Activated CD4-positive, alpha-beta memory T cell treated with anti-CD3 and anti-CD28 coated beads, Interleukin-2, amount 10 ng/mL, durations not matched to agents 7 days and 5 days (primary cell): ENCODE measurements at regions of chr19 and their contacts with region 1.

Region 1: DNA sequence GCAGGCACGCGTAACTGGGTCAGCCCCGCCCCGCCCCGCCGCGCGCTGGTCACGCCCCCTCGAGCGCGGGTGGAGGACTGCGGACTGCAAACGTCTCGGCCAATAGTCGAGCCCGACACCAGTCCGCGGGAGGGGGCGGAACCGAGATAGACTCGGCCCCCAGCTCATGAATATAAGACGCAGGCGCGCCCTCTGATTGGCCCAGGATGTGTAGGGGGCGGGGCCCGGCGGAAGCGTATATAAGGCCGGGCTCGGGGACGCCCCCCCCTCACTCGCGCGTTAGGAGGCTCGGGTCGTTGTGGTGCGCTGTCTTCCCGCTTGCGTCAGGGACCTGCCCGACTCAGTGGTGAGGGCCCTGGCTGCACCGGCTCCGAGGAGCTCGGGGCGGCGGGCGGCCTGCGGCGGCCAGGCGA is at the start of gene CIRBP:
- DNase-seq: peak; percentile 100
- H3K4me3 Mint-ChIP-seq: peak within 1 kb of the TSS; percentile 91
- H3K27ac Mint-ChIP-seq: peak within 1 kb of the TSS; percentile 85
- H3K4me1 Mint-ChIP-seq: peaks cover 70% of the 10 kb centered on the region
- H3K27me3 Mint-ChIP-seq: peaks cover 3% of the 10 kb centered on the region
- total RNA-seq, gene CIRBP: 203 to 204 TPM

Region 2: GRCh38 chr19:984165-984967 is 284.7 kb before region 1 on chr19 and contains the start of gene WDR18:
- CTCF ChIA-PET with region 1: no interaction called
- POLR2A ChIA-PET with region 1: interaction called, 10 read pairs
- DNase-seq: peak; percentile 91
- H3K4me3 Mint-ChIP-seq: peak within 1 kb of the TSS; percentile 91
- H3K27ac Mint-ChIP-seq: peak within 1 kb of the TSS; percentile 83
- H3K4me1 Mint-ChIP-seq: peaks cover 22% of the 10 kb centered on the region
- H3K27me3 Mint-ChIP-seq: no peaks in the 10 kb centered on the region
- total RNA-seq, gene WDR18: 42.0 to 44.3 TPM

Region 3: GRCh38 chr19:1064661-1065605 is 204.1 kb before region 1 on chr19:
- CTCF ChIA-PET with region 1: interaction called, 4 read pairs
- POLR2A ChIA-PET with region 1: interaction called, 20 read pairs
- DNase-seq: peak; percentile 81
- H3K4me3 Mint-ChIP-seq: peak overlapping the region; percentile 47
- H3K27ac Mint-ChIP-seq: peak overlapping the region; percentile 51
- H3K4me1 Mint-ChIP-seq: peaks cover 42% of the 10 kb centered on the region
- H3K27me3 Mint-ChIP-seq: no peaks in the 10 kb centered on the region

Region 4: GRCh38 chr19:1087813-1088415 is 181.2 kb before region 1 on chr19:
- CTCF ChIA-PET with region 1: no interaction called
- POLR2A ChIA-PET with region 1: interaction called, 11 read pairs
- DNase-seq: peak; percentile 54
- H3K4me3 Mint-ChIP-seq: peak overlapping the region; percentile 20
- H3K27ac Mint-ChIP-seq: peak overlapping the region; percentile 82
- H3K4me1 Mint-ChIP-seq: peaks cover 45% of the 10 kb centered on the region
- H3K27me3 Mint-ChIP-seq: no peaks in the 10 kb centered on the region

Region 5: GRCh38 chr19:1205114-1206062 is 63.7 kb before region 1 on chr19 and contains the start of gene STK11:
- CTCF ChIA-PET with region 1: interaction called, 3 read pairs
- POLR2A ChIA-PET with region 1: interaction called, 10 read pairs
- DNase-seq: peak; percentile 100
- H3K4me3 Mint-ChIP-seq: peak within 1 kb of the TSS; percentile 92
- H3K27ac Mint-ChIP-seq: peak within 1 kb of the TSS; percentile 85
- H3K4me1 Mint-ChIP-seq: peaks cover 36% of the 10 kb centered on the region
- H3K27me3 Mint-ChIP-seq: no peaks in the 10 kb centered on the region
- total RNA-seq, gene STK11: 84.2 to 85.1 TPM

Region 6: DNA sequence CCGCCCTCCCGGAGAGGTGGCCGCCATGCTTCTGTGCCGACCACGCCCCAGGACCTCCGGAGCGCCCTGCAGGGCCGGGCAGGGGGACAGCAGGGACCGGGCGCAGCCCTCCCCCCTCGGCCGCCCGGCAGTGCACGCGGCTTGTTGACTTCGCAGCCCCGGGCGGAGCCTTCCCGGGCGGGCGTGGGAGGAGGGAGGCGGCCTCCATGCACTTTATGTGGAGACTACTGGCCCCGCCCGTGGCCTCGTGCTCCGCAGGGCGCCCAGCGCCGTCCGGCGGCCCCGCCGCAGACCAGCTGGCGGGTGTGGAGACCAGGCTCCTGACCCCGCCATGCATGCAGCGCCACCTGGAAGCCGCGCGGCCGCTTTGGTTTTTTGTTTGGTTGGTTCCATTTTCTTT is 41.4 kb before region 1 on chr19:
- CTCF ChIA-PET with region 1: no interaction called
- POLR2A ChIA-PET with region 1: no interaction called
- DNase-seq: no peak
- H3K4me3 Mint-ChIP-seq: no peak overlapping the region
- H3K27ac Mint-ChIP-seq: no peak overlapping the region
- H3K4me1 Mint-ChIP-seq: no peaks in the 10 kb centered on the region
- H3K27me3 Mint-ChIP-seq: no peaks in the 10 kb centered on the region

Region 7: GRCh38 chr19:1249298-1249989 is 19.6 kb before region 1 on chr19:
- CTCF ChIA-PET with region 1: interaction called, 412 read pairs
- POLR2A ChIA-PET with region 1: interaction called, 266 read pairs
- DNase-seq: peak; percentile 97
- H3K4me3 Mint-ChIP-seq: peak overlapping the region; percentile 80
- H3K27ac Mint-ChIP-seq: peak overlapping the region; percentile 82
- H3K4me1 Mint-ChIP-seq: peaks cover 16% of the 10 kb centered on the region
- H3K27me3 Mint-ChIP-seq: no peaks in the 10 kb centered on the region

Region 8: DNA sequence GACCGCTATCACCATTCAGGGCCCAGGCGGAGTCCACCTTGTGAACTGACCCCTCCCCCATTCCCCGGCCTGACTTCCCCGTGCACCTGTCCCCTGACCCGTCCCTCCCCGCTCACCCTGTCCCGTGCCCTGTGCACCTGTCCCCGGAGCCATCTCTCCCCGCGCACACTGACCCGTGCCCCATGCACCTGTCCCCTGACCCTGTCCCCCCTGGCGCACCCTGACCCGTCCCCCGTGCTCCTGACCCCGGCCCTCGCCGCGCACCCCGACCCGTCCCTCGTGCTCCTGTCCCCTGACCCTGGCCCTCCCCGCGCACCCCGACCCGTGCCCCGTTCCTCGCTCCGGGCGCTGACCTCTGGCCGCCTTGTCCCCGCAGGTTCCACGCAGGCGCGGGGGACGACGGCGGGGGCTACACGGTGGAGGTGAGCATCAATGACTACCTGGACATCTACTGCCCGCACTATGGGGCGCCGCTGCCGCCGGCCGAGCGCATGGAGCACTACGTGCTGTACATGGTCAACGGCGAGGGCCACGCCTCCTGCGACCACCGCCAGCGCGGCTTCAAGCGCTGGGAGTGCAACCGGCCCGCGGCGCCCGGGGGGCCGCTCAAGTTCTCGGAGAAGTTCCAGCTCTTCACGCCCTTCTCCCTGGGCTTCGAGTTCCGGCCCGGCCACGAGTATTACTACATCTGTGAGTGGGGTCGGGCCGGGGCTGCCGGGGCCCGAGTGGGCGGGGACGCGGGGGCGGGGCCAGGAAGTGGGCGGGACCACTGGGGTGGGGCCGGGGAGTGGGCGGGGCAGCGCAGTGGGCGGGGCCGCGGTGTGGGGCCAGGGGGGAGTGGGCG is 26.3 kb after region 1 on chr19:
- CTCF ChIA-PET with region 1: no interaction called
- POLR2A ChIA-PET with region 1: no interaction called
- DNase-seq: peak; percentile 46
- H3K4me3 Mint-ChIP-seq: no peak overlapping the region
- H3K27ac Mint-ChIP-seq: no peak overlapping the region
- H3K4me1 Mint-ChIP-seq: no peaks in the 10 kb centered on the region
- H3K27me3 Mint-ChIP-seq: peaks cover 5% of the 10 kb centered on the region